ENCODE measurements at regions of chr6 and their contacts with region 1.

Region 1: GRCh38 chr6:140043336-140043735 is 668.9 kb upstream of the CITED2 start:
- DNase-seq: peak; percentile 66
- H3K4me3 ChIP-seq: no peak overlapping the region
- H3K27ac ChIP-seq: peak overlapping the region; percentile 73
- H3K4me1 ChIP-seq: peaks cover 47% of the 10 kb centered on the region
- H3K27me3 ChIP-seq: no peaks in the 10 kb centered on the region
- CTCF ChIP-seq: no peak

Region 2: DNA sequence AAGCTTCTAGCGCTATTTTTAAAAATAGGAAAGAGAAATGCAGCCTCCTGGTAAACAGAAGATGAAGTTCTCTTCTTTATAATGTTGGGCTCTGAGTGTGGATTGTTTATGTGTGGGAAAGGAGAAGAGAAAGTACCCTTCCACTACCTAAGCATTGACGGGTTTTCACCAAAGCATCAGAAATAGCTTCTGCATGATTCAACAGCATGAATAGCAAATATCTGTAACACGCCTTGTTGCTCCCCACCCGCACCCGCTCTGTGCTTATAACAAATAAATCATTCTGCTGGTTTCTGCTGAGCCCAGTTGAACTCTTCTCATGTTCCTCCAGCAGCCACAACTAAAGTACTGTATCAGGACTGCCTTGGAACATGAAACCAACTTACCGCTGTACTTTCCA is 772.3 kb before region 1 on chr6:
- CTCF ChIA-PET with region 1: no interaction called
- POLR2A ChIA-PET with region 1: no interaction called
- intact Hi-C with region 1: no loop called
- DNase-seq: no peak
- H3K4me3 ChIP-seq: no peak overlapping the region
- H3K27ac ChIP-seq: no peak overlapping the region
- H3K4me1 ChIP-seq: no peaks in the 10 kb centered on the region
- H3K27me3 ChIP-seq: no peaks in the 10 kb centered on the region
- CTCF ChIP-seq: no peak

Region 3: DNA sequence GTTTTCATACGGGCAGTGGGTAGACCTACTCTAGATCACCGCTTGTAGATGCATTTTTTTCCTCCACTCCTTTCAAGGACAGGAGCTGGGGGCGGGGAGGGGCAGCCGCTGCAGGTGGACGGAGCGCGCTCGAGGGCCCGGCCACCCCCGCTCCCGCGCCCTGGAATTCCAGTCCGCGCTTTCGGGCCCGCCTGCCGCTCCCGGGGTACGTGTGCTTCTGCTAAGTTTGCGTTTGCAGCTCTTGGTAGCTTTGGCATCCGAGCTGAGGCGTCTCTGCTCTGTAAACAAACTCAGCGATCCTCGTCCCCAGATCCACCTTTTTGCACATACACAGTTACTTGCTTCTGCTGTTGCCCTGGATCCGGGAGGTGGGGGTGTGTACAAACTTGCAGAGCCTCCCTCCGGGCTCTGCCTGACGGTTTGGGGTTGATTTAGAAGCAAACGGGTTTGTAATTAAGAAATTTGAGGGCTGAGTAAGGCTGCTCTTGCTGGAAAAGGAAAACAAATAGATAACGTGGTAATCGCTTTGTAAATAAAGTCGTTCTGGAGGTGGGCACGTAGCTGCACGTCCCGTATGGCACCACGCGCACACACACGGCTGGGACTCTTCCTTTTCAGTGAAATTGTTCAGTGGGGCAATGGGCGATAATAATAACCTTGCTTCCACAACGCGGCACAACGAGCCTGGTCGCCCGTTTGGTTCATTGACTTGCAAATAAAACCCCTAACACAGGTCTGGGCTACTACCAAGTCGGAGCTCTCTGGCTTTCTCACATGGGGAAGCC is 667.9 kb before region 1 on chr6:
- CTCF ChIA-PET with region 1: no interaction called
- POLR2A ChIA-PET with region 1: interaction called, 6 read pairs
- intact Hi-C with region 1: loop called (anchors 1 kb)
- DNase-seq: peak; percentile 97
- H3K4me3 ChIP-seq: peak overlapping the region; percentile 87
- H3K27ac ChIP-seq: peak overlapping the region; percentile 96
- H3K4me1 ChIP-seq: peaks cover 10% of the 10 kb centered on the region
- H3K27me3 ChIP-seq: no peaks in the 10 kb centered on the region
- CTCF ChIP-seq: peak; percentile 38; the same call in 1 of the 2 replicates

Region 4: GRCh38 chr6:139732451-139732850 is 310.9 kb before region 1 on chr6:
- CTCF ChIA-PET with region 1: no interaction called
- POLR2A ChIA-PET with region 1: no interaction called
- intact Hi-C with region 1: loop called (anchors 10 kb)
- DNase-seq: no peak
- H3K4me3 ChIP-seq: no peak overlapping the region
- H3K27ac ChIP-seq: no peak overlapping the region
- H3K4me1 ChIP-seq: no peaks in the 10 kb centered on the region
- H3K27me3 ChIP-seq: no peaks in the 10 kb centered on the region
- CTCF ChIP-seq: no peak

Region 5: GRCh38 chr6:139970591-139970991 is 72.7 kb before region 1 on chr6:
- CTCF ChIA-PET with region 1: no interaction called
- POLR2A ChIA-PET with region 1: interaction called, 20 read pairs
- intact Hi-C with region 1: no loop called
- DNase-seq: no peak
- H3K4me3 ChIP-seq: no peak overlapping the region
- H3K27ac ChIP-seq: no peak overlapping the region
- H3K4me1 ChIP-seq: peaks cover 16% of the 10 kb centered on the region
- H3K27me3 ChIP-seq: no peaks in the 10 kb centered on the region
- CTCF ChIP-seq: no peak

Region 6: DNA sequence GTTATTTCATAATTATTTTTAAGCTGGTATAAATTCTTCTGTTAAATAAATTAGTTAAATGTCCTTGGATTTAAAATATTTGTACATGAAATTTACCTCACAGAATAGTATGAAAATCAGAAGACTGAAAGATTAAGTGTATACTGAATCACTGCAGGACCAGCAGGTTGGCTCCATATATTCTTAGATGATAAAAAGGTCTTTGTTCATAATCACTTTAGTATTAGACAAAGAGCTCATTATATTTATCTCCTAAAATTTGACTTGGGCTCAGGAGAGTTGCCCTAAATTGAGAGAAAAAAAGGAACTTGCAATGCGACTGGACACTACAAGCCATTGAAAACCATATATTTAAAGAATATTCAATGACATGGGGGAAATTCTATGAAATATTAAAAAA is 97.6 kb after region 1 on chr6:
- CTCF ChIA-PET with region 1: no interaction called
- POLR2A ChIA-PET with region 1: no interaction called
- intact Hi-C with region 1: no loop called
- DNase-seq: no peak
- H3K4me3 ChIP-seq: no peak overlapping the region
- H3K27ac ChIP-seq: no peak overlapping the region
- H3K4me1 ChIP-seq: no peaks in the 10 kb centered on the region
- H3K27me3 ChIP-seq: no peaks in the 10 kb centered on the region
- CTCF ChIP-seq: no peak

Region 7: GRCh38 chr6:140372064-140372463 is 328.7 kb after region 1 on chr6:
- CTCF ChIA-PET with region 1: no interaction called
- POLR2A ChIA-PET with region 1: no interaction called
- intact Hi-C with region 1: loop called (anchors 2 kb)
- DNase-seq: peak; percentile 96
- H3K4me3 ChIP-seq: no peak overlapping the region
- H3K27ac ChIP-seq: peak overlapping the region; percentile 72
- H3K4me1 ChIP-seq: peaks cover 22% of the 10 kb centered on the region
- H3K27me3 ChIP-seq: no peaks in the 10 kb centered on the region
- CTCF ChIP-seq: no peak

Region 8: DNA sequence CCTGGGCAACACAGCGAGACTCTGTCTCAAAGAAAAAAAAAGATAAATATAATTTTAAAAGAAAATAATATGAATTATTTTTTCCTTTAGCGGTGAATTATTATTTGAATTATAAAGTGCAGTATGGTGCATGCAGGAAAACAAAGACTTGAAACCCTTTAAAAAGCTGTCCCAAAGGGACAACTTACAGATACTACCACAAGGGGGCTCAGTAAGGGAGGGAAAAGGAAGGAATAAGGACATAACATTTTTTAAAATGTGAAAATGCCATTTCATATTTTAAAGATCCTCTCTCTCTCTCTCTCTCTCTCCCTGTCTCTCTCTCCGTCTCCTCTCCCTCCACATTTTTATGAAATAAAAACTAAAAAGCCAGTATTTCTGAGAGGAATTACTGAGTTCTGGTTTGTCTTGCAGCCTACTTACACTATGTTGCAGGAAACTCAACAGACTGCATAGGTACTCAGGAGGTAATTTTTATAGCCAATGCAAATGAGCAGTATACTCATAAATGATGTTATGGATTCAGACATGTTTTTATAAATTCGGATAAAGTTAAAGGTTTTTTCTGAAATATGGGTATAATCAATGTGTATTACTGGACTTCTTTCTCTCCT is 1634.4 kb after region 1 on chr6:
- CTCF ChIA-PET with region 1: no interaction called
- POLR2A ChIA-PET with region 1: no interaction called
- intact Hi-C with region 1: loop called (anchors 5 kb)
- DNase-seq: peak; percentile 76
- H3K4me3 ChIP-seq: no peak overlapping the region
- H3K27ac ChIP-seq: no peak overlapping the region
- H3K4me1 ChIP-seq: peaks cover 22% of the 10 kb centered on the region
- H3K27me3 ChIP-seq: no peaks in the 10 kb centered on the region
- CTCF ChIP-seq: peak; percentile 72

Measured in A673 (cell line).